ENCODE measurements at regions of chr22 and their contacts with region 1.

Region 1: DNA sequence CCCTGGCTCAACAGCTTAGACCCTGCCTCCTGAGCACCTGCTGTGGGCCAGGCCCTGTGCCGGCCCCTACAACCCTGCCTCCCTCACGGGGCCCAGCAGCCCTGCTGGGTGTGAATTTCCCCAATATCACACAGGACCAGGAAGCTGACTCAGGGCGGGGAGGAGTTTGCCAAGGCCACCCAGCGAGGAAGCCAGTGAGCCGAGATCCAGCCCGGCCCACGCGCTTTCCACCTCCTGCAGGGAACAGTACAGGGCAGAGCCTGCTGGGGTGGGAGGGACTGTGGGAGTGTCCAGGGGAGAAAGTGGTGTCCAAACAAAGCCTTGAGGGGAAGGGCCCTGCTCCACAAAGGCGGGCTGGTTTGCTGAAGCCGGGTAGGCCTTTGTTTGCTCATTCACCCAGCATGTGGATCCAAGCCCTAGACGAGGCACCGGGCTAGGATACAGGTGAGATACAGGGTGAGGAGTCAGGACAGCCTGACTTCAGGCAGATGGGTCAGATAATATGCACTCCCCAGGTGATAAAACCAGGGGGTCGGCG is 26.8 kb downstream of the RPL3 start:
- DNase-seq: peak; percentile 95 to 98
- ATAC-seq: peak; percentile 87
- H3K4me3 ChIP-seq: no peak overlapping the region
- H3K27ac ChIP-seq: no peak overlapping the region
- H3K4me1 ChIP-seq: no peaks in the 10 kb centered on the region
- H3K27me3 ChIP-seq: no peaks in the 10 kb centered on the region

Region 2: GRCh38 chr22:39253435-39254070 is 39.1 kb before region 1 on chr22:
- intact Hi-C with region 1: loop called in 1 of 2 experiments (anchors 5 kb)
- DNase-seq: peak; percentile 79 to 87
- ATAC-seq: peak; percentile 71
- H3K4me3 ChIP-seq: no peak overlapping the region
- H3K27ac ChIP-seq: peak overlapping the region in 1 of 2 donors; percentile 20
- H3K4me1 ChIP-seq: peaks cover 2 to 7% of the 10 kb centered on the region in 2 donors
- H3K27me3 ChIP-seq: no peaks in the 10 kb centered on the region

Region 3: GRCh38 chr22:40009292-40009769 is 716.7 kb after region 1 on chr22:
- intact Hi-C with region 1: no loop called
- DNase-seq: peak in 1 of 2 donors; percentile 57
- ATAC-seq: no peak
- H3K4me3 ChIP-seq: no peak overlapping the region
- H3K27ac ChIP-seq: no peak overlapping the region
- H3K4me1 ChIP-seq: no peaks in the 10 kb centered on the region
- H3K27me3 ChIP-seq: no peaks in the 10 kb centered on the region

Measured in aorta (tissue), 5 donors.